HCT116 (cell line): ENCODE measurements at regions of chr22 and their contacts with region 1.

Region 1: DNA sequence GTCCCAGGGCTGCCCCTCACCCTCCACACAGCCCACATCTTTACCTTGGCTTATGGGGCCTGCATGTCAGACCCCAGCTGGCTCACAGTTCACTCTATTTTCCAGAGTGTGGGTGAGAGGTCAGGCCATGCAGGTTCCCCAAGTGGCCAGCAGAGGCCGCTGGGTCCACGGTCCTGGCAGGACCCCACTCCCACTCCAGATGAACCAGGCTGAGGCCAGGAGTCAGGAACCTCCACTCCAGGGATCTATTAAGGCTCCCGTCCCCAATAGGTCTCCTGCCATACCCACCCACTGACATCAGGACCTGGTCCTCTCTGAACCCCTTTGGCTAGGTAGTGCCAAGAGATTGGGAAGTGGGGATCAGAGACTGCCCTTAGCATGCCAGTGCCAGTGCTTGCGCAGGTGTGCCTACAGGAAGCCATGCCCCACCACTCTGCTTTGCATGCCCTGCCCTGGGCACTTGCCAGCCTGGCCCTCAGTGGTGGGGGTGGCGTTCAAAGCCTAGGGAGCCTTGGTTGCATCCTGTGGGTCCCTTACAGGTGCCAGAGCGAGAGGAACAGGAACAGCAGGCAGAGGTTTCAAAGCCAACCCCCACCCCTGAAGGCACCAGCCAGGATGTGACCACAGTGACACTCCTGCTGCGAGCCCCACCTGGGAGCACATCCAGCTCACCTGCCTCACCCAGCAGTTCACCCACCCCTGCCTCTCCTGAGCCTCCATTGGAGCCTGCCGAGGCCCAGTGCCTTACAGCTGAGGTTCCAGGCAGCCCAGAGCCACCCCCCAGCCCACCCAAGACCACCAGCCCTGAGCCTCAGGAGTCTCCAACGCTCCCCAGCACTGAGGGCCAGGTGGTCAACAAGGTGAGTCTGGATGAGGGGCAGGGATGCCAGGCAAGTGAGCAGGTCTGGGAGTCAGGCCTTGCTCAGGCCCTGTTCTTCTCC is 8.3 kb downstream of the SMTN start:
- DNase-seq: no peak
- ATAC-seq: no peak
- H3K4me3 ChIP-seq: no peak overlapping the region
- H3K27ac ChIP-seq: no peak overlapping the region
- H3K4me1 ChIP-seq: peaks cover 0 to 25% of the 10 kb centered on the region in 2 experiments; a peak in 2 of 4 replicates
- H3K27me3 ChIP-seq: no peaks in the 10 kb centered on the region
- CTCF ChIP-seq: peak in 2 of 3 experiments; percentile 82 to 83; a peak in 4 of 6 replicates
- POLR2A ChIP-seq: no peak
- RAD21 ChIP-seq: no peak

Region 2: GRCh38 chr22:30920407-30920806 is 169.0 kb before region 1 on chr22:
- CTCF ChIA-PET with region 1: no interaction called
- POLR2A ChIA-PET with region 1: no interaction called
- RAD21 ChIA-PET with region 1: no interaction called
- intact Hi-C with region 1: no loop called
- DNase-seq: peak; percentile 32
- ATAC-seq: peak; percentile 94
- H3K4me3 ChIP-seq: no peak overlapping the region
- H3K27ac ChIP-seq: no peak overlapping the region
- H3K4me1 ChIP-seq: no peaks in the 10 kb centered on the region
- H3K27me3 ChIP-seq: no peaks in the 10 kb centered on the region
- CTCF ChIP-seq: peak; percentile 82 to 91 (median 83)
- POLR2A ChIP-seq: no peak
- RAD21 ChIP-seq: peak; percentile 85

Region 3: GRCh38 chr22:31148953-31149627 is 59.7 kb after region 1 on chr22:
- CTCF ChIA-PET with region 1: interaction called, 4 read pairs
- POLR2A ChIA-PET with region 1: no interaction called
- RAD21 ChIA-PET with region 1: no interaction called
- intact Hi-C with region 1: loop called (anchors 1 kb)
- DNase-seq: peak; percentile 66
- ATAC-seq: peak; percentile 96
- H3K4me3 ChIP-seq: no peak overlapping the region
- H3K27ac ChIP-seq: no peak overlapping the region
- H3K4me1 ChIP-seq: peaks cover 0 to 15% of the 10 kb centered on the region in 2 experiments; a peak in 2 of 4 replicates
- H3K27me3 ChIP-seq: no peaks in the 10 kb centered on the region
- CTCF ChIP-seq: peak; percentile 90 to 99 (median 93)
- POLR2A ChIP-seq: no peak
- RAD21 ChIP-seq: peak; percentile 96